ENCODE measurements at regions of chr22 and their contacts with region 1.

Region 1: DNA sequence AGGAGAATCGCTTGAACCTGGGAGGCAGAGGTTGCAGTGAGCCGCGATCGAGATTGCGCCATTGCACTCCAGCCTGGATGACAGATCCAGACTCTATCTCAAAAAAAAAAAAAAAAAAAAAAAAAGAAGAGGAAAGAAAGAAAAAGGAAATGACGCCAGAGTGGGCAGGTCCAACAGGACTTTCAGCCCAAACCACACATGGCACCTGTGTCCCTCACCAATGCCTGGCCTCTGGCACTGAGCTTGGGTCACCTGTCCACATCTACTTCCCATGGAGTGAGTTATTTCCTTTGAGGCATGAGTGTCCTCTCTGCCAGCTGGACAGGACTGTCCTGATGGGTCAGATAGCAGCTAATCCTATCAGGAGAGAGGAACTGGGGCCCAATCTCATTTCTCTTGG is 15.2 kb upstream of the GCAT start:
- DNase-seq: no peak
- H3K4me3 ChIP-seq: no peak overlapping the region
- H3K27ac ChIP-seq: no peak overlapping the region
- H3K4me1 ChIP-seq: no peaks in the 10 kb centered on the region
- H3K27me3 ChIP-seq: no peaks in the 10 kb centered on the region
- CTCF ChIP-seq: no peak

Region 2: GRCh38 chr22:37077884-37078485 is 714.5 kb before region 1 on chr22:
- CTCF ChIA-PET with region 1: no interaction called
- dilution Hi-C with region 1: no loop called
- in situ Hi-C with region 1: no loop called
- intact Hi-C with region 1: no loop called
- DNase-seq: peak; percentile 7
- H3K4me3 ChIP-seq: no peak overlapping the region
- H3K27ac ChIP-seq: no peak overlapping the region
- H3K4me1 ChIP-seq: no peaks in the 10 kb centered on the region
- H3K27me3 ChIP-seq: no peaks in the 10 kb centered on the region
- CTCF ChIP-seq: peak; percentile 91 to 100

Region 3: GRCh38 chr22:37658133-37659065 is 134.1 kb before region 1 on chr22 and contains the start of gene PDXP:
- CTCF ChIA-PET with region 1: no interaction called
- dilution Hi-C with region 1: no loop called
- in situ Hi-C with region 1: no loop called
- intact Hi-C with region 1: loop called (anchors 1 kb)
- DNase-seq: peak; percentile 100
- H3K4me3 ChIP-seq: peak within 1 kb of the TSS; percentile 47 to 84 (median 55)
- H3K27ac ChIP-seq: peak within 1 kb of the TSS; percentile 41
- H3K4me1 ChIP-seq: peaks cover 21% of the 10 kb centered on the region
- H3K27me3 ChIP-seq: no peaks in the 10 kb centered on the region
- CTCF ChIP-seq: no peak
- total RNA-seq, gene PDXP: 5.8 to 6.9 TPM

Region 4: DNA sequence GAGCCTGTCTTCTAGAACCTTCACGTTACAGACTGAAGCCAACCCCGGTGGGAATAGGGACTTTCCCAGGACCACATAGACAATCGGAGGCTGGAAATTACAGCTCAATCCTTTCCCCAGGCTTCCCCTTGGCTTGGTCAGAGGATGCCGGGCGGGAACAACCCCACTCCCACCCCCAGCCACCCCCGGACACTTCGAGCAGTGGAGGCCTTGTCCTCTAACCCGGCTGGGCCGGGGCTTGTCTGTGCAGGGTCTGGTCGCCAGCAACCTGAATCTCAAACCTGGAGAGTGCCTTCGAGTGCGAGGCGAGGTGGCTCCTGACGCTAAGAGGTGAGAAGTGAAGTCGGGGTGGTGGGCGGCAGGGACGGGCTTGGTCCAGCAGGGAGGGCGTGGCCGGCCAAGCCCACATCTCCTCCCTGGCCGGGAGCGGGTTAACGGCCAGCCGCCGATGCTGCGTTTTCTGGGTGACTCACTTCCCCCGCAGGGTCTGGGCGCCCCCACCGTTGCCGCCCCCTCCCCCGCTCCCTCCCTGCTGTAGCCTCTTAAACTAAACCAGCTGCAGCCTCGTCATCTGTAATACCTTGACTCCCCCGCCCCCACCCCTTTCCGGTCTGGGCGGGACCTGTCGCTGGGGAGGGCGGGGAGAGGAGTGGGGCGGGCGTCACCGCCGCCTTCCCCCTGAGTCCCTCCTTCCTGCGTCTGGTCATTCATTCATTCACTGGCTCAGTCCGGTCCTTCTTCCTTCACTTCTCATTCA is 115.6 kb before region 1 on chr22:
- CTCF ChIA-PET with region 1: no interaction called
- dilution Hi-C with region 1: no loop called
- in situ Hi-C with region 1: no loop called
- intact Hi-C with region 1: loop called (anchors 1 kb)
- DNase-seq: peak; percentile 96
- H3K4me3 ChIP-seq: peak overlapping the region; percentile 67 to 76 (median 72)
- H3K27ac ChIP-seq: peak overlapping the region; percentile 78
- H3K4me1 ChIP-seq: peaks cover 33% of the 10 kb centered on the region
- H3K27me3 ChIP-seq: no peaks in the 10 kb centered on the region
- CTCF ChIP-seq: no peak

Region 5: GRCh38 chr22:37905534-37906363 is 113.3 kb after region 1 on chr22 and contains the start of gene MICALL1:
- CTCF ChIA-PET with region 1: no interaction called
- dilution Hi-C with region 1: no loop called
- in situ Hi-C with region 1: no loop called
- intact Hi-C with region 1: no loop called
- DNase-seq: peak; percentile 87
- H3K4me3 ChIP-seq: peak within 1 kb of the TSS; percentile 72 to 93 (median 87)
- H3K27ac ChIP-seq: peak within 1 kb of the TSS; percentile 95
- H3K4me1 ChIP-seq: peaks cover 48% of the 10 kb centered on the region
- H3K27me3 ChIP-seq: no peaks in the 10 kb centered on the region
- CTCF ChIP-seq: no peak
- total RNA-seq, gene MICALL1: 247 to 249 TPM

Region 6: DNA sequence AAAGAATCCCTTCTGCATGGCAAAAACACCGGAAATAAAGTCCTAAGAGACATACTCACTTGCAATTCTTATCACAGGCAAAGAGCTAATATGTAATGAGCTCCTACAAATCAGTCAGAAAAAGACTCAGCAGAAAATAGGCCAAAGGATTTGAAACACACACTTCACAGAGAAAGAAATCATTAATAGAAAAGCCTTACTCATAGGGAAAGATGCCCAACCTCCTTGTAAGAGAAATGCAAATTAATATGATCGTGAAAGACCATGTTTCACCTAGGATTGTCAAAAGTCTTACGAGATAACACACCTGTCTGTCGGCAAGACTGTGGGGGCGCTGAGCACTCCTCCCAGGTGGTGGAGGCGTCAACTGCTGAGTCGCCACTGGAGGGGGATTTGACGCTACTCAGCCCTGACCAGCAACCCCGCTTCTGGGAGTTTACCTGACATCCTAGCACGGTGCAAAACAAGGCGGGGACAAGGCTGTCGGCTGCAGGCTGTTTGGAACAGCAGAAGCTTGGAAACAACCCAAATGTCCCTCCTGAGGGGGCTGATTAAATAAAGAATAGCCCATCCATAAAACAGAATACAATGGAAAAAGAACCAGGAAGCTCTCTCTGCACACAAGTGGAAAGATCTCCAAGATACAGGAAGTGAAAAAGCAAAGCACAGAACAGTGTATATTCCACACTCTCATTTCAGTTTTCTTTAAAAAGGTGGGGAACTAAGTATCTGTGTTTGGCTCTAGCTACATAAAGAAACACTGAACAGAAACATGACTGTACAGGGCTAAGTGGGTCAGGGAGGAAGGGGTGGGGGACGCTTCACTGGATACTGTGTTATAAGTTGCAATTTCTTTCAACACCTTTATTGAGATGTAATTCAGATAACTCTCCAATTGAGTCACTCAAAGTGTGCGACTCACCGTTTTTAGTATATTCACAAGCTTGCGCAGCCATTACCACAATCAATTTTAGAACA is 513.3 kb after region 1 on chr22:
- CTCF ChIA-PET with region 1: no interaction called
- dilution Hi-C with region 1: no loop called
- in situ Hi-C with region 1: no loop called
- intact Hi-C with region 1: no loop called
- DNase-seq: peak; percentile 63
- H3K4me3 ChIP-seq: no peak overlapping the region
- H3K27ac ChIP-seq: peak overlapping the region; percentile 85
- H3K4me1 ChIP-seq: peaks cover 53% of the 10 kb centered on the region
- H3K27me3 ChIP-seq: no peaks in the 10 kb centered on the region
- CTCF ChIP-seq: peak in 1 of 2 donors; percentile 27

Measured in mammary epithelial cell (primary cell).